ENCODE measurements at regions of chr16 and their contacts with region 1.

Region 1: DNA sequence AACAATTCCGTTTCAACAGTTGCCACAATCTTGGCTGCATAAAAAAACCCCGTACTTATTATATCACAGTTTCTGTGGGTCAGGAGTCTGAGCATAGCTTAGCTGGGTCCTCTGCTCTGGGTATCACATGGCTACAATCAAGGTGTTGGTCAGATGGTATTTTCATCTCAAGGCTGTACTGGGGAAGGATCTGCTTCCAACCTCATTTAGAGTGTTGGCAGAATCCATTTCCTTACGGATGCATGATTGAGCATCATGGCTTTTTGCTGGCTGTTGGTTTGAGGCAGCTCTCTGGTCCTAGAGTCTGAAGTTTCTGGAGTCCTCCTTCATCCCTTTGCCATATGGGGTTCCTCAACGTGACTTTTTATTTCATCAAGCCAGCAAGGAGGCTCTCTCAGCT is 177.0 kb downstream of the HAPSTR1 start:
- DNase-seq: no peak
- ATAC-seq: no peak

Region 2: DNA sequence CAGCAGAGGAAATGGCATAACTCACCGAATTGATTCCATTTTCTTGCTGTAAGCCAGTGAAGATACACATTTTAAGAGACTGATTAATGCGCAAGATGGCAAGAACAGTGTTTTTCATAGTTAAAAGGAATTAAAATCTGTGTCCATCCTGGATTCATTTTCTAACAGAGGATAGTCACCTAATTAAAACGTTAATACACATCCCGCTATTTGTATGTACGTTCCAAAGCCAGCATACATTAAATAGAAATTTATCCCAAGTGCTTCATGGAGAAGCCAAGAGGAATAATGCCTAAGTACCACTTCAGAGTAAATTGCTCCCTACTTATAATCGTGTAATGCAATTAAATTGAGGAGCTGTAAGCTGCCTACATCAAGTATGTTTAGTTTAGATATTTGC is 1885.9 kb before region 1 on chr16:
- intact Hi-C with region 1: loop called (anchors 5 kb)
- DNase-seq: no peak
- ATAC-seq: no peak

Region 3: GRCh38 chr16:8855011-8855786 is 413.2 kb before region 1 on chr16:
- intact Hi-C with region 1: no loop called
- DNase-seq: peak; percentile 49
- ATAC-seq: no peak

Region 4: GRCh38 chr16:9225611-9226316 is 42.7 kb before region 1 on chr16:
- intact Hi-C with region 1: no loop called
- DNase-seq: no peak
- ATAC-seq: no peak